AG04449 (cell line): ENCODE measurements at regions of chr5 and their contacts with region 1.

Region 1: GRCh38 chr5:150217873-150218692 is 28.2 kb downstream of the SLC6A7 start:
- DNase-seq: peak; percentile 37
- H3K4me3 ChIP-seq: no peak overlapping the region
- CTCF ChIP-seq: peak; percentile 89

Region 2: GRCh38 chr5:150000256-150000989 is 217.7 kb before region 1 on chr5 and contains the starts of genes HMGXB3 and TIGD6:
- CTCF ChIA-PET with region 1: interaction called, 11 read pairs
- POLR2A ChIA-PET with region 1: no interaction called
- DNase-seq: peak; percentile 57
- H3K4me3 ChIP-seq: peak within 1 kb of the TSS; percentile 98
- CTCF ChIP-seq: peak; percentile 18

Region 3: GRCh38 chr5:150129813-150130492 is 88.1 kb before region 1 on chr5:
- CTCF ChIA-PET with region 1: interaction called, 222 read pairs
- POLR2A ChIA-PET with region 1: interaction called, 3 read pairs
- DNase-seq: no peak
- H3K4me3 ChIP-seq: no peak overlapping the region
- CTCF ChIP-seq: peak; percentile 95

Region 4: GRCh38 chr5:150175076-150175935 is 42.8 kb before region 1 on chr5:
- CTCF ChIA-PET with region 1: interaction called, 27 read pairs
- POLR2A ChIA-PET with region 1: no interaction called
- DNase-seq: no peak
- H3K4me3 ChIP-seq: no peak overlapping the region
- CTCF ChIP-seq: peak; percentile 72

Region 5: GRCh38 chr5:150286890-150287219 is 68.8 kb after region 1 on chr5:
- CTCF ChIA-PET with region 1: no interaction called
- POLR2A ChIA-PET with region 1: no interaction called
- DNase-seq: no peak
- H3K4me3 ChIP-seq: no peak overlapping the region
- CTCF ChIP-seq: no peak

Region 6: GRCh38 chr5:150481972-150482406 is 263.9 kb after region 1 on chr5:
- CTCF ChIA-PET with region 1: no interaction called
- POLR2A ChIA-PET with region 1: no interaction called
- DNase-seq: no peak
- H3K4me3 ChIP-seq: no peak overlapping the region
- CTCF ChIP-seq: no peak